ENCODE measurements at regions of chr9 and their contacts with region 1.

Region 1: DNA sequence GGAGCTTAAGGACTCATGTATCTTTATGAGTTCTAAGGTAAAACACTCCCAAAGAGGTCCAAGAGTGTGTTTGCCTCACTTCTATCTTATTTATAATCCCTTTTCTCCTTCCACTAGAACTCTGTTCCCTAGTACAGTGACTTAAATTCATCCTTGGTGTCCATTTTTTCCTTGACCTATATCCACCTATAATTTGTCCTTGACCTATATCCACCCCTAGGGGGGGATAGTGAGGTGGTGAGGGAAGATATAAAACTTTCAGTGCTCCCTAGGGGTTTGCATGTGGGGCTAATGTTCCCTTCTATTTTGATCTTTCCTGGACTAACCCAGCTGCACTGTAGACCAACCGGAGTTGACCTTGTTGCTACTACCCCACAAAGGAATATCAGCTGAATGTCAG is 83.5 kb upstream of the GNAQ start:
- DNase-seq: peak in 2 of 5 donors; percentile 12 to 21
- H3K4me3 ChIP-seq: no peak overlapping the region
- H3K4me3 Mint-ChIP-seq: no peak overlapping the region
- H3K27ac ChIP-seq: no peak overlapping the region
- H3K27ac Mint-ChIP-seq: no peak overlapping the region
- H3K4me1 ChIP-seq: peaks cover 29% of the 10 kb centered on the region
- H3K4me1 Mint-ChIP-seq: peaks cover 31 to 62% (median 38%) of the 10 kb centered on the region in 3 donors
- H3K27me3 ChIP-seq: no peaks in the 10 kb centered on the region
- H3K27me3 Mint-ChIP-seq: peaks cover 0 to 2% of the 10 kb centered on the region in 2 donors

Region 2: GRCh38 chr9:78089101-78089500 is 26.0 kb before region 1 on chr9:
- CTCF ChIA-PET with region 1: no interaction called
- POLR2A ChIA-PET with region 1: no interaction called
- DNase-seq: no peak
- H3K4me3 ChIP-seq: no peak overlapping the region
- H3K4me3 Mint-ChIP-seq: no peak overlapping the region
- H3K27ac ChIP-seq: no peak overlapping the region
- H3K27ac Mint-ChIP-seq: no peak overlapping the region
- H3K4me1 ChIP-seq: no peaks in the 10 kb centered on the region
- H3K4me1 Mint-ChIP-seq: no peaks in the 10 kb centered on the region
- H3K27me3 ChIP-seq: no peaks in the 10 kb centered on the region
- H3K27me3 Mint-ChIP-seq: peaks cover 0 to 2% of the 10 kb centered on the region in 2 donors

Region 3: DNA sequence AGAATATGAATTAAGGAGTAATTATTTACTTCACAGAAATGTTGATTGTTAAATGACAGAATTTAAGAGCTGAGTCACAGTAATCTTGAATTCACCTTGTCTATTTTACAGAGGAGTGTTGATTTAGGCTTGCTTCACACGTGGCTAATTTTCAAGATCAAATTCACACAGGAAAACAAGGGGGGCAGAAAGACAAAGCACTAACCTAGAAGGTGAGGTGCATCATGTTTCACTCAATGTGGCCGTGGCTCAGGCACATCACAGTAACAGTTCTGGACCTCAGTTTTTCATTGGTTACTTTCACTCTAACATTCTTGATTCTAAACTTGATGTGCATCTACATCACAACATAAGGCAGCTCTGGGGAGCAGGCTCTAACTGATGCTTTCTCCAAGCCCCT is 13.8 kb before region 1 on chr9:
- CTCF ChIA-PET with region 1: no interaction called
- POLR2A ChIA-PET with region 1: interaction called, 11 read pairs
- DNase-seq: peak in 1 of 5 donors; percentile 16
- H3K4me3 ChIP-seq: no peak overlapping the region
- H3K4me3 Mint-ChIP-seq: peak overlapping the region in 1 of 7 donors; percentile 10
- H3K27ac ChIP-seq: no peak overlapping the region
- H3K27ac Mint-ChIP-seq: peak overlapping the region in 3 of 8 donors; percentile 35 to 71 (median 62)
- H3K4me1 ChIP-seq: peaks cover 12% of the 10 kb centered on the region
- H3K4me1 Mint-ChIP-seq: peaks cover 25 to 57% (median 27%) of the 10 kb centered on the region in 3 donors
- H3K27me3 ChIP-seq: no peaks in the 10 kb centered on the region
- H3K27me3 Mint-ChIP-seq: no peaks in the 10 kb centered on the region

Region 4: GRCh38 chr9:78213712-78214111 is 98.6 kb after region 1 on chr9:
- CTCF ChIA-PET with region 1: interaction called, 15 read pairs
- POLR2A ChIA-PET with region 1: no interaction called
- DNase-seq: peak in 2 of 5 donors; percentile 16 to 32
- H3K4me3 ChIP-seq: no peak overlapping the region
- H3K4me3 Mint-ChIP-seq: peak overlapping the region in 1 of 7 donors; percentile 51
- H3K27ac ChIP-seq: no peak overlapping the region
- H3K27ac Mint-ChIP-seq: peak overlapping the region in 3 of 8 donors; percentile 65 to 66 (median 66)
- H3K4me1 ChIP-seq: peaks cover 40% of the 10 kb centered on the region
- H3K4me1 Mint-ChIP-seq: peaks cover 44 to 52% (median 47%) of the 10 kb centered on the region in 3 donors
- H3K27me3 ChIP-seq: no peaks in the 10 kb centered on the region
- H3K27me3 Mint-ChIP-seq: peaks cover 0 to under 1% of the 10 kb centered on the region in 2 donors